IMR-90 (cell line): ENCODE measurements at regions of chr14 and their contacts with region 1.

Region 1: DNA sequence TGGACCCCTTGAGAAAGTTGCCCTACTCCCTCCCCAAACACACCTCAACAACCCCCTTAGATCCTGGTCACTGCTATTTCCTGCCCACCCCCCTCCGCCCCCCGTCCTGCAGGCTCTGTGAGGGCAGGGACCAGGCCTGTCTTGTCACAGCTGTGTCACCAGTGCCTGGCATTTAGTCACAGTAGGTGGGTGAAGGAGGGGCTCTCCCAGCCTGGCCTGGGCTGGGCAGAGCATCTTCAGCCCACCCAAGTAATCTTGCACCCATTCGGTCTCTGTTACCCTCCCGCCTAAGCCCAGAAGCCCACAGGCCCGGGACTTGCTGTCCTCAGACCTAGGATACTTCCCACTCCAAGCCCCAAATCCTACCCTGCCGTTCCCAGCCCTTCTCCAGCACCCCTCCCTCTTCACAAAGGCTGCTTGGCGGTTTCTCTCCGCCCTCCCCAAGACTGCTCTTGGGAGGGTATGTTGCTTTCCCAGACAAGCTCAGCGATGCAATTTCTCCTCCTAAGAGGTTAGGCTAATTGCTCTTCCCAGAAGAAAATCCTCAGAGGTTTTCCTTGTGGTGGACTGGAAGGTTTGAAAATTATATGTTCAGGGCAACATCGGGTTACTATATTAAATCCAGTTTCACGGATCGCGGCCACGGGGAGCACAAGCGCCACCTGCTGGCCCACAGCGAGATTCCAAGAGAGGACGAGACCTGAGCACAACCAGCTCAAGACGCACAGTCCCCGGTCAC is 50.8 kb upstream of the ZFP36L1 start:
- DNase-seq: peak; percentile 57
- ATAC-seq: peak; percentile 77
- H3K4me3 ChIP-seq: no peak overlapping the region
- H3K27ac ChIP-seq: no peak overlapping the region
- H3K4me1 ChIP-seq: peaks cover 15% of the 10 kb centered on the region; the same call in 1 of the 2 replicates
- H3K27me3 ChIP-seq: no peaks in the 10 kb centered on the region
- CTCF ChIP-seq: peak; percentile 81
- POLR2A ChIP-seq: 0 out of 2 replicates have a peak, but pooled peaks have one; percentile 47
- RAD21 ChIP-seq: peak; percentile 66

Region 2: GRCh38 chr14:67934008-67934481 is 909.6 kb before region 1 on chr14:
- CTCF ChIA-PET with region 1: no interaction called
- POLR2A ChIA-PET with region 1: no interaction called
- dilution Hi-C with region 1: no loop called
- in situ Hi-C with region 1: no loop called
- intact Hi-C with region 1: loop called (anchors 5 kb)
- DNase-seq: peak; percentile 85
- ATAC-seq: peak; percentile 96
- H3K4me3 ChIP-seq: no peak overlapping the region
- H3K27ac ChIP-seq: no peak overlapping the region; the same call in 1 of the 2 replicates
- H3K4me1 ChIP-seq: no peaks in the 10 kb centered on the region; the same call in 1 of the 2 replicates
- H3K27me3 ChIP-seq: no peaks in the 10 kb centered on the region
- CTCF ChIP-seq: peak; percentile 75
- POLR2A ChIP-seq: no peak
- RAD21 ChIP-seq: peak; percentile 71

Region 3: DNA sequence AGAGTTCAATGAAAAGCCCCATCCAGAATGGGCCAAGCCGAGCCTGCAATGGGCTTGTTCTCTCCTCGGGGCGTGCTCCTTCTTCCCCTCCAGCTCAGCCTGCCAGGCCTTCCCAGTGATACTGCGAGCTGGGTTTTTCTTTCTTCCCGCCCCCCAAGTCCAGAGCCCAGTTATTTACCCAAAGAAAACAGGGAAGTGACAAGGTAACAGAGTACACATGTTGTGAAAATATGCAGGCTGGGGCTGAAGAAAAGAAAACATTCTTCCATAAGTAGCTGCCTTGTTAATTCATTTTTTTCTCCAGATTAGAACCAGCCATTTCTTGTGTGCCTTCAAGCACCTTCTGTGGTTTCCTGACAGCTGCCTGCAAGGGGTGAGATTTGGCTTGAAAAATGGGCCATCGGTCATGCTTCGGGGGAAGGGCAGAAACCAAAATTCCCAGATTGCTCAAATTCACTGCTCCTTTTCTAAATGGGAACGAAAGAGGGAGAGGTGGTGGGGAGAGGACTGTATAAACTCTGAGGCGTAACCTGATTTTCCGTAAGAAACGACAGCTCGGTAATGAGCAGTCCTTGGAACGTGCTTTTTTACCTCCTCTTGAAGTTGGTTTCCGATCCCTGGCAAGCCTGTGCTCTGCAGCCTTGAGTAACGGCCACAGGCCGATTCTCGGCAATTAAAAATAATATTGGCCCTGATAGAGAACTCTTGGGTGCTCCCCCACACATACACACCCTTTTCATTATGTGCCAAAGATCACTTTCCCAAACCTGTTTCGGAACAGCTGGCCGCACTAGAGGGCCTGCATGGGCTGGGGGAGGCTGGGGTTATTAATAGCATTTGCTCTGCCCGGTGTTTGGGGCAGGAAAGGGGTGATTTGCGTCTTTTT is 280.2 kb before region 1 on chr14:
- CTCF ChIA-PET with region 1: no interaction called
- POLR2A ChIA-PET with region 1: no interaction called
- dilution Hi-C with region 1: no loop called
- in situ Hi-C with region 1: no loop called
- intact Hi-C with region 1: no loop called
- DNase-seq: peak; percentile 35
- ATAC-seq: peak; percentile 59
- H3K4me3 ChIP-seq: no peak overlapping the region
- H3K27ac ChIP-seq: peak overlapping the region; percentile 34; the same call in 1 of the 2 replicates
- H3K4me1 ChIP-seq: peaks cover 11% of the 10 kb centered on the region
- H3K27me3 ChIP-seq: no peaks in the 10 kb centered on the region
- CTCF ChIP-seq: no peak
- POLR2A ChIP-seq: no peak
- RAD21 ChIP-seq: no peak